Posterior vena cava (tissue), 2 donors: ENCODE measurements at regions of chr3 and their contacts with region 1.

Region 1: DNA sequence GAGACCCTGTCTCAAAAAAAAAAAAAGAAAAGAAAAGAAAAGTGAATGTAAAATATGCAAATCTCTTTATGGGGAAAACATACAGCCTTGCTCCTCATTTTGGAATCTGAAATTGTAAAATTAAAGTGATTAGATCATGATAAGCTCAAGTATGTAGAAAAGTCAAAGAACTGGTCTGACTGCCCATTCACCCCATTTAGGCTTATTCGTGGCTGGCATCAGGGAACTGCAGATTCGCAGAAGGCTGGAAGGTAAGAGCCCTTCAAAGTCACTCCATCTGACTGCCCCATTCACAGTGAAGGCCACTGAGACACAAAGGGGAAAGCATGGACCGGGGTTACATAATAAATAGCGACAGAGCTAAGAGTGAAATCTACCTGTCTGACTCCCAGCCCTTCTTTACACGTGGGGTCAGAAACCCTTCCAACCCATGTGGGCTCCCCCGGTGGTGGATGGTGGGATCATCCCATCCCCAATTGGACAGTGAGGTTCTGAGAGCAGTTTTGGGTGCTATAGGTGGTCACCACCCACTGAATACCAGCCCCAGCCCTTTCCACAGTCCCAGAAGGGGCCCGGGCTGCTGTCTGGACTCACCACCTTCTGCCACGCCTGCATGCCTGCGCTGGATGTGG is 18.1 kb downstream of the DZIP1L start:
- DNase-seq: no peak

Region 2: GRCh38 chr3:139353920-139354556 is 1256.8 kb after region 1 on chr3:
- intact Hi-C with region 1: loop called in 1 of 2 experiments (anchors 10 kb)
- DNase-seq: no peak